Activated CD8-positive, alpha-beta memory T cell treated with anti-CD3 and anti-CD28 coated beads, Interleukin-2, amount 10 ng/mL, durations not matched to agents 7 days and 5 days (primary cell): ENCODE measurements at regions of chr6 and their contacts with region 1.

Region 1: GRCh38 chr6:31441365-31442267 is 38.2 kb downstream of the MICA start:
- DNase-seq: peak; percentile 88
- ATAC-seq: peak; percentile 100
- H3K4me3 Mint-ChIP-seq: no peak overlapping the region
- H3K27ac Mint-ChIP-seq: no peak overlapping the region
- H3K4me1 Mint-ChIP-seq: peaks cover 2% of the 10 kb centered on the region
- H3K27me3 Mint-ChIP-seq: peaks cover 69% of the 10 kb centered on the region

Region 2: GRCh38 chr6:31453259-31453658 is 11.6 kb after region 1 on chr6:
- CTCF ChIA-PET with region 1: interaction called, 10 read pairs
- DNase-seq: no peak
- ATAC-seq: no peak
- H3K4me3 Mint-ChIP-seq: no peak overlapping the region
- H3K27ac Mint-ChIP-seq: no peak overlapping the region
- H3K4me1 Mint-ChIP-seq: no peaks in the 10 kb centered on the region
- H3K27me3 Mint-ChIP-seq: peaks cover 38% of the 10 kb centered on the region